ENCODE measurements at regions of chr18 and their contacts with region 1.

Region 1: DNA sequence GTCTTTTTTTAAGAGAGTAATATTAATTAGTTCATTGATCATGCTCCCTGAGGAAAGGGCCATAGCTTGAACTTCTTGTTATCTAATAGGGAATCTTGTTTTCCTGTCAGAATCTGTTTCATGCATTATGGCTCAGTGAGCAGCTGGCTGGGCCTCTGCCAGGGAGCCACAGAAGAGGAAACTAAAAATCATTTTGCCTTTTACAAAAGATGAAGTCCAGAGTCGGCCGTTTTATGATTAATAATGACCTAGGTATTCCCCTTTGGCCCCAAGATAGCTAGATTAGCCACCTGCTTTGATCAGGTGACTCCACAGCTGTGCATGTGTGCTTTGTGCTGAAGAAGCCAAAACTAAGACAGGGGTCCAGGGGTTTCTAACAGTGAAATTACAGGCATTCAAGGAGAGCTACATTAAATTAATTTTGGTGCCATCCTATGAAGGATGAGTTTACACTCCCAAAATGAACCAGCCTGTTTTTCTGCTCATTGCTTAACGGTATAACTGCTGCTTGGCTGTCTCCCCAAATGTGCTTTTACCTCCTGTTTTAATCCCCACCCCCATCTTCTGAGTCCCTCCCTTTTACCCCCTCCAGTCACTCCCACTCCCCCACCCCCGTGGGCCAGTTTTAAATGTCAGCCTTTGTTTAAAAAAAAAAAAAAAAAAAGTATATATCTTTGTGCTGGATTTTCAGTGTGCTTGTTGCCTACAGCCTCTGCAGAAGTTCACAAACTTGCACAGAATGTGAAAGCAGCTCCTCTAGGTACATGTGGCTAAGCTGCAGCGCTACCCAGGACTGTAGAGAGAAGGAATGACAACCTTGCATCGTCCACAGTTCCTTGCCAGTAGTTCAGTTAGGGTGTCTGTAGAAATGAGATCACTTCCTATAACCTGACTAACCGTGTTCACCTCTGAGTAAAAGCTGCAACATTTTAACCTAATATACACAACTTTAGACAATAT is 93.1 kb downstream of the CABLES1 start:
- DNase-seq: peak; percentile 75
- ATAC-seq: no peak
- H3K4me3 ChIP-seq: no peak overlapping the region
- H3K27ac ChIP-seq: peak overlapping the region; percentile 72
- H3K4me1 ChIP-seq: peaks cover 38% of the 10 kb centered on the region
- H3K27me3 ChIP-seq: no peaks in the 10 kb centered on the region
- CTCF ChIP-seq: no peak
- POLR2A ChIP-seq: no peak
- RAD21 ChIP-seq: no peak

Region 2: GRCh38 chr18:22789600-22789999 is 438.8 kb before region 1 on chr18:
- CTCF ChIA-PET with region 1: no interaction called
- POLR2A ChIA-PET with region 1: no interaction called
- dilution Hi-C with region 1: no loop called
- in situ Hi-C with region 1: no loop called
- intact Hi-C with region 1: no loop called
- DNase-seq: no peak
- ATAC-seq: peak; percentile 51
- H3K4me3 ChIP-seq: no peak overlapping the region
- H3K27ac ChIP-seq: no peak overlapping the region
- H3K4me1 ChIP-seq: peaks cover 1% of the 10 kb centered on the region; the same call in 1 of the 2 replicates
- H3K27me3 ChIP-seq: peaks cover 4% of the 10 kb centered on the region
- CTCF ChIP-seq: no peak
- POLR2A ChIP-seq: no peak
- RAD21 ChIP-seq: no peak

Region 3: DNA sequence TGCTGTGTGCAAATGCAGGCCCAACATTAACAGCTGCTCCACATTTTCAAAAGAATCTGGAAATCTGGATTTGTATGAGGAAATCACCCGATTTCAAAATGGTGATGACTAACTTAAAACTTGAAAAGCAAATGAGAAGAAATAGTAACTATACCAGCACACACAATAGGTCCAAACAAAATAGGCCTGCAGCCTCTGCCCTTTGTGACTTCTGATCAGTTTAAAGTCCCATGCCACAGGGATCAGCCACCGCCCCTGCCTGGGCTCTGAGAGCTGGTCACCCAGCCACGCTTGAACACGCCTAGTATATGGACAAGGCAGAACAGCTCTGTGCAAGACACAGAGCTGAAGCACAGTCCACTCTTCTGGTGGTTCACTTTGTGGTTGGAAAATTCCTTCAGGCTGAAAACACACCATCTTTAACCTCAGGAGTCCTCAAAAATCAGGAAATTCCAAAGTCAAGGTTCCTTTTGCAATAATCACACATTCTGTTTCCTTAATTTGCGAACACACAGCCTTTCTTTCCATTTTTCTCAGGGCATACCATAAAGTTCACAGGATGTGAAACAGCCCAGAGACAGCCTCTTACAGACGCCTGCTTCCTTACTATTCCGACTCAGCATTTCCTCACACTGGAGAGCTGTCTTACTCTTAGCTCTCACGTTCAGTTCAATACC is 74.6 kb after region 1 on chr18:
- CTCF ChIA-PET with region 1: no interaction called
- POLR2A ChIA-PET with region 1: no interaction called
- dilution Hi-C with region 1: no loop called
- in situ Hi-C with region 1: no loop called
- intact Hi-C with region 1: loop called (anchors 5 kb)
- DNase-seq: peak; percentile 81
- ATAC-seq: peak; percentile 59
- H3K4me3 ChIP-seq: no peak overlapping the region
- H3K27ac ChIP-seq: peak overlapping the region; percentile 95
- H3K4me1 ChIP-seq: peaks cover 35% of the 10 kb centered on the region
- H3K27me3 ChIP-seq: no peaks in the 10 kb centered on the region
- CTCF ChIP-seq: no peak
- POLR2A ChIP-seq: no peak
- RAD21 ChIP-seq: no peak

Measured in IMR-90 (cell line).